Activated CD4-positive, alpha-beta T cell treated with anti-CD3 and anti-CD28 coated beads for 36 hours (primary cell): ENCODE measurements at regions of chr12 and their contacts with region 1.

Region 1: GRCh38 chr12:62793256-62794217 is 141.4 kb downstream of the PPM1H start:
- DNase-seq: peak; percentile 84
- ATAC-seq: peak; percentile 55
- H3K4me3 Mint-ChIP-seq: no peak overlapping the region
- H3K27ac Mint-ChIP-seq: no peak overlapping the region
- H3K4me1 Mint-ChIP-seq: peaks cover 3% of the 10 kb centered on the region
- H3K27me3 Mint-ChIP-seq: peaks cover 2% of the 10 kb centered on the region

Region 2: DNA sequence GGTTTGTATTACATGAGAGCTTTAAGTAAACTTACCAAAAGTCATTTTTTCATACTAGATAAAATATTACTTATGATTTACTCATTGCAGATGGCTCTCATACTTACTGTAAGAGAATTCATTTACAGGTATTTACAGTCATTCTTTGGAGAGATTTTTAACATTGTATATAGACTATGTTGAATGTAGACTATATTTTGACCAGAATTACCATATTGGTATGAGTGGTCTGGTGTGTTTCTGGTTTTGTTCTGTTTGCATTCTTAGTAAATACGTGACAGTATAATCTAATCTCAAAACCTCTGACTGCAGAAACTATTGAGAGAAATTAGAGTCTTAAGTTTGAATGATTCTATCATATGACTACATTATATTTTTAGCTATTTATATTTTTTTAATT is 442.2 kb before region 1 on chr12:
- CTCF ChIA-PET with region 1: no interaction called
- POLR2A ChIA-PET with region 1: interaction called, 10 read pairs
- intact Hi-C with region 1: no loop called
- DNase-seq: no peak
- ATAC-seq: peak; percentile 64
- H3K4me3 Mint-ChIP-seq: no peak overlapping the region
- H3K27ac Mint-ChIP-seq: no peak overlapping the region
- H3K4me1 Mint-ChIP-seq: peaks cover 19% of the 10 kb centered on the region
- H3K27me3 Mint-ChIP-seq: no peaks in the 10 kb centered on the region

Region 3: GRCh38 chr12:62500042-62500441 is 293.5 kb before region 1 on chr12:
- CTCF ChIA-PET with region 1: no interaction called
- POLR2A ChIA-PET with region 1: no interaction called
- intact Hi-C with region 1: no loop called
- DNase-seq: no peak
- ATAC-seq: no peak
- H3K4me3 Mint-ChIP-seq: no peak overlapping the region
- H3K27ac Mint-ChIP-seq: no peak overlapping the region
- H3K4me1 Mint-ChIP-seq: no peaks in the 10 kb centered on the region
- H3K27me3 Mint-ChIP-seq: no peaks in the 10 kb centered on the region

Region 4: GRCh38 chr12:62522984-62523383 is 270.6 kb before region 1 on chr12:
- CTCF ChIA-PET with region 1: interaction called, 15 read pairs
- POLR2A ChIA-PET with region 1: no interaction called
- intact Hi-C with region 1: loop called (anchors 1 to 5 kb)
- DNase-seq: no peak
- ATAC-seq: peak; percentile 91
- H3K4me3 Mint-ChIP-seq: no peak overlapping the region
- H3K27ac Mint-ChIP-seq: no peak overlapping the region
- H3K4me1 Mint-ChIP-seq: peaks cover 49% of the 10 kb centered on the region
- H3K27me3 Mint-ChIP-seq: no peaks in the 10 kb centered on the region

Region 5: DNA sequence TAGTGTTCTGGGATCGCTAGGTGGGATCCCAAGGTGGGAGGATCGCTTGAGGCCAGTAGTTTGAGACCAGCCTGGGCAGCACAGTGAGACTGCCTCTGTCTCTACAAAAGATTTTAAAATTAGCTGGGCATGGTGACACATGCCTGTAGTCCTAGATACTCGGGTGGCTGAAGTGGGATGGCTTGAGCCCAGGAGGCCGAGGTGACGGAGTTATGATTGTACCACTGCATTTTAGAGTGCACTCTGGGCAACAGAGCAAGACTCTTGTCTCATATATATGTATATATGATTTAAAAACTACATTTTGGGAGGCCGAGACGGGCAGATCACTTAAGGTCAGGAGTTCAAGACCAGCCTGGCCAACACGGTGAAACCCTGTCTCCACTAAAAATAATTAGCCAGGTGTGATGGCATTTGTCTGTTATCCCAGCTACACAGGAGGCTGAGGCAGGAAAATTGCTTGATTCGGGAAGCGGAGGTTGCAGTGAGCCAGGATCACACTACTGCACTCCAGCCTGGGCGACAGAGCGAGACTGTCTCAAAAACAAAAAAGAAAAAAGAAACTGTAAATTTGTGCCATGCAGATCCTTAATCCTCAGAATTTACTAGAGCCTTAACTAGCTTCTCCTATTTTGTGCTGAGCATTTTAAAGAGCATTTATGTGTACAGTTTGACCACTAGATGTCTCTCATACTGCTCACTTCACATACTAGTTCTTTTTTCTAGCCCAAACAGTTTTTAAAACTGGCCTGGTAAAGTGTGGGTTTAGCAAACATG is 212.1 kb before region 1 on chr12:
- CTCF ChIA-PET with region 1: interaction called, 139 read pairs
- POLR2A ChIA-PET with region 1: no interaction called
- intact Hi-C with region 1: loop called (anchors 1 kb)
- DNase-seq: no peak
- ATAC-seq: no peak
- H3K4me3 Mint-ChIP-seq: no peak overlapping the region
- H3K27ac Mint-ChIP-seq: no peak overlapping the region
- H3K4me1 Mint-ChIP-seq: no peaks in the 10 kb centered on the region
- H3K27me3 Mint-ChIP-seq: no peaks in the 10 kb centered on the region

Region 6: DNA sequence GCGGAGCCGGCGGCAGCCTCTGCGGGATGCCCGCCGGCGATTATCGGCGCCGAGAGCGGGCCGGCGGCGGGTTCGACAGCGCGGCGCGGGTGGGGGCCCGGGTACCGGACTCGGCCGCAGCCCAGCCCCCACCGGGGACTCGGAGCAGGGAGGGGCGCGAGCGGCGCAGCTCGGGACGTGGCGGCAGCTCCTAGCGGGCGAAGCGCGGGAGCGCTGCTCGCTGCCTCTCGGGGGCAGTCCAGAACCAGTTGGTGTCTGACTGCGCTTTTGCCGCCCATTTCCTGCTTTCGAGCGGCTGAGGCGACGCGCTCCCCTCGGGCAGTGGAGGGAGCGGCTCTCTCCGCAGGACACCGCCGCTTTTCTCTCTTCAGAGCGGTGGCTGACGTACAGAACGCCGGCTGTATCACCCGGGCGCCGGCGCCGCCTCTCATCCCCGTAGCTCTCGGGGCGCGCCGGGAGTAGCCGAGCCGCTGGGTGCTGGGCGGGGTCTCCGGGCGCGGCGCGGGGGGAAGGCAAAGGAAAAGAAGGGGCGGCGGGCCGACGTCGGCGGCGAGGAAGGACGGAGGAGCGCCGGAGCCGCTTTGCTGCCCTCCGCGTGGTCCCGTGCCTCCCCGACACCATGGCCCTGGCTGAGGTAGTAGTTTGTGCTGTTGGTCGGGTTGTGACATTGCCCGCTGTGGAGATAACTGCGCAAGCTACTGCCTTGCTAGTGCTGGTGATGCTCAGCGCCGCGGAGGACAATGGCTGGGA is 190.3 kb before region 1 on chr12:
- CTCF ChIA-PET with region 1: interaction called, 9 read pairs
- POLR2A ChIA-PET with region 1: interaction called, 3 read pairs
- intact Hi-C with region 1: loop called (anchors 5 kb)
- DNase-seq: peak; percentile 87
- ATAC-seq: peak; percentile 78
- H3K4me3 Mint-ChIP-seq: peak overlapping the region; percentile 77
- H3K27ac Mint-ChIP-seq: peak overlapping the region; percentile 97
- H3K4me1 Mint-ChIP-seq: peaks cover 35% of the 10 kb centered on the region
- H3K27me3 Mint-ChIP-seq: no peaks in the 10 kb centered on the region

Region 7: GRCh38 chr12:62813031-62813829 is 19.7 kb after region 1 on chr12:
- CTCF ChIA-PET with region 1: interaction called, 40 read pairs
- POLR2A ChIA-PET with region 1: no interaction called
- intact Hi-C with region 1: no loop called
- DNase-seq: peak; percentile 68
- ATAC-seq: peak; percentile 65
- H3K4me3 Mint-ChIP-seq: peak overlapping the region; percentile 43
- H3K27ac Mint-ChIP-seq: peak overlapping the region; percentile 6
- H3K4me1 Mint-ChIP-seq: peaks cover 19% of the 10 kb centered on the region
- H3K27me3 Mint-ChIP-seq: peaks cover 5% of the 10 kb centered on the region

Region 8: GRCh38 chr12:62860020-62860419 is 66.5 kb after region 1 on chr12:
- CTCF ChIA-PET with region 1: no interaction called
- POLR2A ChIA-PET with region 1: no interaction called
- intact Hi-C with region 1: no loop called
- DNase-seq: no peak
- ATAC-seq: no peak
- H3K4me3 Mint-ChIP-seq: no peak overlapping the region
- H3K27ac Mint-ChIP-seq: no peak overlapping the region
- H3K4me1 Mint-ChIP-seq: peaks cover 3% of the 10 kb centered on the region
- H3K27me3 Mint-ChIP-seq: peaks cover 2% of the 10 kb centered on the region